Activated CD4-positive, alpha-beta memory T cell treated with anti-CD3 and anti-CD28 coated beads for 36 hours (primary cell): ENCODE measurements at regions of chr11 and their contacts with region 1.

Region 1: GRCh38 chr11:103035791-103036434 is 56.0 kb downstream of the DCUN1D5 start:
- DNase-seq: no peak
- H3K4me3 Mint-ChIP-seq: peak overlapping the region; percentile 55
- H3K27ac Mint-ChIP-seq: peak overlapping the region; percentile 84
- H3K4me1 Mint-ChIP-seq: peaks cover 18% of the 10 kb centered on the region
- H3K27me3 Mint-ChIP-seq: peaks cover 2% of the 10 kb centered on the region

Region 2: DNA sequence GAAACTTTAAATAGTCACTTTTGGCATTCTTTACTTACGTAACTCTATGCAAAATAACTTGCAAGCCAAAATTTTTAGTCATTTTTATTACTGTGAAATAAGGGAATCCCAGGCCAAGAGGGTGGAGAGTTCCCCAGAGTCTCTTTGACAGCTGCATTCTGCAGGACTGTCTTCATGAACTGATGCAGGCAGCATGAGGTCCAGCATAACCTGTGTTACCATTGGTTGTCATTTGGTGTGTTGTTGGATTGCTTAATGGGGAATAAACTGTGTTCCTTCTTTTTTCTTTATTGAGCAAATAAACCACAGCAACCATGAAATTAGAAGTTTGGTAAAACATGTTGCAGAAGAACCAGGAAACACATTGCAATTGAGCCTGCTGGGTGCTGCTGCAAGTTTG is 355.0 kb before region 1 on chr11:
- CTCF ChIA-PET with region 1: no interaction called
- POLR2A ChIA-PET with region 1: no interaction called
- intact Hi-C with region 1: no loop called
- DNase-seq: no peak
- H3K4me3 Mint-ChIP-seq: no peak overlapping the region
- H3K27ac Mint-ChIP-seq: no peak overlapping the region
- H3K4me1 Mint-ChIP-seq: no peaks in the 10 kb centered on the region
- H3K27me3 Mint-ChIP-seq: peaks cover 26% of the 10 kb centered on the region

Region 3: DNA sequence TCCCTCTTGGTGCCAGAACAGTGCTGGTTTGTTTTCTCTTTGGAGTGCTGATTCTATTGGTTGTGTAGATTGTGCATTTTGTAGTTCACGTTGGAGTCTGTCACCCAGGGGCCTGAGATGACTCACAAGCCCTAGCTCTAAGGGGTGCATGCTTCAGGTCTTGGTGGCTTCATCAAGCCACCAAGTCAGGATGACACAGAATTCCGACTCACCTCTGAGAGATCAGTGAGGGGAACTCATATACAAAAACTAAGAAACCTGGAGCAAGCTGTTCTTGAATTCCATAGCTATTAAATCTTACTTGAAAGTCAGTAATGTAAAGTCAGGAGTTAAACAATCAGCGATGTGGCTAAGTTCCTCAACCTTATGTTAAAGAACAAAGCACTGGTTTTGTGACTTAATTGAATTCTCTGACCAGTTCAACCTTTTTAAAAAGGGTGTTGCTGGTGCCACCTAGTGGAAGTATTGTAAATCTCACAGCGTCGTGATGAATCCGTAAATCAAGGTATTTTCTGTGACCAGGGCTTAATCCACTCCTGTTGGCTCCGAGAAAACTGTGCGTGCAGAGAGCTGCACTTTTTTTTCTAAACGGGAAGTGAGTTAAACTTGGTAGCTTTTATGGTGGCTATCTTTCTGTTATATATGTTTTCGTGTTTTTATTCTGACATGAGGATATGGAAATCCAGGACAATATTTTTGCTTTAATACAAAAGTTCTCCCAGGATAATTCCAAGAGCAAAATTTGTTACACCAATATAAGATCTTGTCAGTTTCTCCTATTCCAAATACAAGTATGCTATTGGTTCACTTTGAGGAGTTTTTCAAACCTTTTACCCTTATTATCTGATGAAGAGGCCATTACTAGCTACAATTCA is 95.0 kb before region 1 on chr11:
- CTCF ChIA-PET with region 1: interaction called, 4 read pairs
- POLR2A ChIA-PET with region 1: no interaction called
- intact Hi-C with region 1: loop called (anchors 1 kb)
- DNase-seq: peak; percentile 38
- H3K4me3 Mint-ChIP-seq: no peak overlapping the region
- H3K27ac Mint-ChIP-seq: no peak overlapping the region
- H3K4me1 Mint-ChIP-seq: peaks cover 2% of the 10 kb centered on the region
- H3K27me3 Mint-ChIP-seq: peaks cover 3% of the 10 kb centered on the region

Region 4: GRCh38 chr11:103055221-103055890 is 19.4 kb after region 1 on chr11:
- CTCF ChIA-PET with region 1: interaction called, 6 read pairs
- POLR2A ChIA-PET with region 1: no interaction called
- intact Hi-C with region 1: loop called (anchors 1 kb)
- DNase-seq: no peak
- H3K4me3 Mint-ChIP-seq: no peak overlapping the region
- H3K27ac Mint-ChIP-seq: no peak overlapping the region
- H3K4me1 Mint-ChIP-seq: peaks cover 12% of the 10 kb centered on the region
- H3K27me3 Mint-ChIP-seq: no peaks in the 10 kb centered on the region

Region 5: DNA sequence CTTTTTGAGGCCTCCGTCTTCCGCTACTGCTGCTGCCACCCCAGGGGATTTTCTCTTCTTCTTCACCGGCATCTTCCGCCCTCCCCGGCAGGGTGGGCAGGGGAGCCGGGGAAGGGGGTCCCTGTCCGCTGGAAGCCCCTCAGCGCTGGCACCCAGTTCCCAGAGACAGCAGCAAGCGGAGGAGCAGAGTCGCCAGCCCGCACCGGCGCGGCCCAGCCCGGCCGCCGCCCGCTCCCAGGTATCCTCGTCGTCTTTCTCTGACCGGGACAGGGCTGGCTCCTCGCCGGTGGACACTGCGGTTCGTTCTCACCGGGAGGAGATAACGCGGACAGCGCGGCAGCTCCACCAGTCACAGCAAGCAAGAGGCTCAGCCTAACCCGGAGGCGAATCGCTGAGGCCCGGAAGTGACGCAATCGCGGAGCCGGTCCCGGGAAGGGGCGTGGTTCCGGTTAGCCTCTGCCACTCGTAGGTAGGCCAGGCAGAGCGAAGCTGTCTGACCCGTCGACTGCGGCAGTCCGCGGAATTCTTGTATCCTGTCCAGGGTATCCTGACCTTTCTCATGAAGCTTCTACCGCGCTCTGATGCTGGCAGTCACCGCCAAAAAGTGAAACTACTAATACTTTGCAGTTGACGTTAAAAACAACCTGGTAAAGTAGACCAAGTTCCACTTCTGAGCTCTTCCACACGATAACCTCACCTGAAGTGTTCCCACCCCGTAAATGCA is 56.0 kb after region 1 on chr11 and contains the start of gene DCUN1D5:
- CTCF ChIA-PET with region 1: interaction called, 4 read pairs
- POLR2A ChIA-PET with region 1: no interaction called
- intact Hi-C with region 1: loop called (anchors 1 kb)
- DNase-seq: peak; percentile 98
- H3K4me3 Mint-ChIP-seq: peak within 1 kb of the TSS; percentile 89
- H3K27ac Mint-ChIP-seq: peak within 1 kb of the TSS; percentile 88
- H3K4me1 Mint-ChIP-seq: peaks cover 25% of the 10 kb centered on the region
- H3K27me3 Mint-ChIP-seq: peaks cover 16% of the 10 kb centered on the region
- total RNA-seq, gene DCUN1D5: 60.1 to 61.0 TPM

Region 6: GRCh38 chr11:103108933-103109817 is 73.3 kb after region 1 on chr11 and contains the start of gene DYNC2H1:
- CTCF ChIA-PET with region 1: interaction called, 8 read pairs
- POLR2A ChIA-PET with region 1: no interaction called
- intact Hi-C with region 1: loop called (anchors 1 kb)
- DNase-seq: peak; percentile 93
- H3K4me3 Mint-ChIP-seq: peak within 1 kb of the TSS; percentile 98
- H3K27ac Mint-ChIP-seq: peak within 1 kb of the TSS; percentile 58
- H3K4me1 Mint-ChIP-seq: peaks cover 5% of the 10 kb centered on the region
- H3K27me3 Mint-ChIP-seq: peaks cover 6% of the 10 kb centered on the region
- total RNA-seq, gene DYNC2H1: 1.4 to 1.7 TPM

Region 7: GRCh38 chr11:103601225-103601846 is 565.4 kb after region 1 on chr11:
- CTCF ChIA-PET with region 1: interaction called, 6 read pairs
- POLR2A ChIA-PET with region 1: no interaction called
- intact Hi-C with region 1: loop called (anchors 1 kb)
- DNase-seq: peak; percentile 37
- H3K4me3 Mint-ChIP-seq: no peak overlapping the region
- H3K27ac Mint-ChIP-seq: no peak overlapping the region
- H3K4me1 Mint-ChIP-seq: no peaks in the 10 kb centered on the region
- H3K27me3 Mint-ChIP-seq: no peaks in the 10 kb centered on the region